ENCODE measurements at regions of chr9 and their contacts with region 1.

Region 1: GRCh38 chr9:27154908-27155307 is 45.9 kb downstream of the TEK start:
- DNase-seq: peak; percentile 96
- H3K4me3 ChIP-seq: no peak overlapping the region
- H3K27ac ChIP-seq: peak overlapping the region; percentile 79
- H3K4me1 ChIP-seq: peaks cover 45% of the 10 kb centered on the region
- H3K27me3 ChIP-seq: no peaks in the 10 kb centered on the region
- CTCF ChIP-seq: no peak
- POLR2A ChIP-seq: no peak

Region 2: GRCh38 chr9:27125030-27125429 is 29.9 kb before region 1 on chr9:
- CTCF ChIA-PET with region 1: interaction called, 10 read pairs
- POLR2A ChIA-PET with region 1: interaction called, 5 read pairs
- dilution Hi-C with region 1: no loop called
- intact Hi-C with region 1: no loop called
- DNase-seq: peak; percentile 89
- H3K4me3 ChIP-seq: no peak overlapping the region
- H3K27ac ChIP-seq: peak overlapping the region; percentile 44
- H3K4me1 ChIP-seq: peaks cover 30% of the 10 kb centered on the region
- H3K27me3 ChIP-seq: no peaks in the 10 kb centered on the region
- CTCF ChIP-seq: no peak
- POLR2A ChIP-seq: no peak

Region 3: DNA sequence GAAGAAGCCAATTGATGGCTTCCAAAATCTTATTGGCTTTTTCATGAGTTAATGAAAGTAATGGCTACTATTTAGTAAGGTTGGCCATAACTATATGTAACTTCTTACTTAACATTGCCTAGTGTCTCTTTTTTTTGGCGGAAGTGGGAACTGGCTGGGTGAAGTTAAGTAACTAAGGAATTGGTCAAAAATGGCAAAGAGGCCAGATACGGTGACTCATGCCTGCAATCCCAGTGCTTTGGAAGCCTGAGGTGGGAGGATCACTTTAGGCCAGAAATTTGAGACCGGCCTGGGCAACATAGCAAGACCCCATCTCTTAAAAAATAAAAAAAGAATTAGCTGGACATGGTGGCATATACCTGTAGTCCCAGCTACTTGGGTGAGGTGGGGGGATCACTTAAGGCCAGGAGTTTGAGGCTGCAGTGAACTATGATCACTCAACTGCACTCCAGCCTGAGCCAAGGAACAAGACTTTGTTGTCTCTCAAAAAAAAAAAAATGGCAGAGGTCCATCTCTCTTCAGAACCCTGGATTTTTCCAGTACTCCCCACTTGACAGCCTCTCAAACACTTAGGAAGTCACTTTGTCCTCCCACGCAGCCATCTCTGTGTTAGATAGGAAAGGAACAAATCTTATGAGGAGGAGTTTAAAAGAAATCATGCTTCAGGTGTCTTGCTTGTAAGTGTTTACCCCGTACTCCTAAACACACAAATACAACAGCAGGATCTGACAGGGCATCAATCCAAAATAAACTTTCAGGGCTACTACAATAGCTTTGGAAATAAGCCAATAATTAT is 29.8 kb after region 1 on chr9:
- CTCF ChIA-PET with region 1: interaction called, 6 read pairs
- POLR2A ChIA-PET with region 1: no interaction called
- dilution Hi-C with region 1: no loop called
- intact Hi-C with region 1: loop called (anchors 2 kb)
- DNase-seq: peak; percentile 92
- H3K4me3 ChIP-seq: no peak overlapping the region
- H3K27ac ChIP-seq: peak overlapping the region; percentile 36
- H3K4me1 ChIP-seq: peaks cover 39% of the 10 kb centered on the region
- H3K27me3 ChIP-seq: no peaks in the 10 kb centered on the region
- CTCF ChIP-seq: no peak
- POLR2A ChIP-seq: no peak

Region 4: GRCh38 chr9:27194401-27195091 is 39.6 kb after region 1 on chr9:
- CTCF ChIA-PET with region 1: interaction called, 3 read pairs
- POLR2A ChIA-PET with region 1: no interaction called
- dilution Hi-C with region 1: no loop called
- intact Hi-C with region 1: loop called (anchors 1 kb)
- DNase-seq: peak; percentile 85
- H3K4me3 ChIP-seq: no peak overlapping the region
- H3K27ac ChIP-seq: peak overlapping the region; percentile 72
- H3K4me1 ChIP-seq: peaks cover 42% of the 10 kb centered on the region
- H3K27me3 ChIP-seq: no peaks in the 10 kb centered on the region
- CTCF ChIP-seq: no peak
- POLR2A ChIP-seq: no peak

Region 5: GRCh38 chr9:27282269-27282668 is 127.4 kb after region 1 on chr9:
- CTCF ChIA-PET with region 1: no interaction called
- POLR2A ChIA-PET with region 1: no interaction called
- dilution Hi-C with region 1: no loop called
- intact Hi-C with region 1: no loop called
- DNase-seq: no peak
- H3K4me3 ChIP-seq: no peak overlapping the region
- H3K27ac ChIP-seq: no peak overlapping the region
- H3K4me1 ChIP-seq: no peaks in the 10 kb centered on the region
- H3K27me3 ChIP-seq: peaks cover 11% of the 10 kb centered on the region in 2 experiments
- CTCF ChIP-seq: no peak
- POLR2A ChIP-seq: no peak

Measured in endothelial cell of umbilical vein (primary cell).